ENCODE measurements at regions of chr22 and their contacts with region 1.

Region 1: GRCh38 chr22:31345331-31346254 is 553 bp downstream of the PATZ1 start:
- DNase-seq: peak; percentile 87
- ATAC-seq: peak; percentile 61 to 64

Region 2: DNA sequence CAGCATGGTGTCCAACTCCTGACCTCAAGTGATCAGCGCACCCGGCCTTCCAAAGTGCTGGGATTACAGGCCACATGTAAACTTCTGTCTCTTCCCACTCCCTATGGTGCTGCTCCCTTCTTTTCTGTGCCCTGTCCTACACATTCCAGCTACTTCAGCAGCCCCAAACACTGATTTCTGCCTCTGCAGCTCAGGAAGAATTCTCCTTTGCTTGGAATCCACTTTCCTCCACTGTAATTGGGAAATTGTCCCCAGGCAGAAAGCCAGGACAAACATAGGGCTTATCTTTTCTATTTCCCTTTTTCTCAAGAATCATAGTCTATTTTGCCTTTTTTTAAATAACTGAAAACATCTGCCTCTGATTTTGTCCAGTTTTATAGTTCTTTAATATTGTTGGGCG is 32.5 kb after region 1 on chr22:
- intact Hi-C with region 1: no loop called
- DNase-seq: peak; percentile 30
- ATAC-seq: peak; percentile 44 to 88

Region 3: GRCh38 chr22:31399211-31400028 is 53.8 kb after region 1 on chr22 and contains the start of gene DRG1:
- intact Hi-C with region 1: loop called (anchors 2 to 10 kb)
- DNase-seq: peak; percentile 98
- ATAC-seq: peak; percentile 100
- total RNA-seq, gene DRG1: 52.1 to 61.4 TPM

Region 4: GRCh38 chr22:31496007-31496734 is 150.6 kb after region 1 on chr22 and contains the start of gene SFI1:
- intact Hi-C with region 1: loop called in 1 of 2 experiments (anchors 10 kb)
- DNase-seq: peak; percentile 94
- ATAC-seq: peak; percentile 97 to 99
- total RNA-seq, gene SFI1: 8.2 to 9.9 TPM

Measured in left cardiac atrium (tissue), 4 donors.